H1 (cell line): ENCODE measurements at regions of chr11 and their contacts with region 1.

Region 1: GRCh38 chr11:44775366-44775984 is 48.7 kb downstream of the TSPAN18 start:
- DNase-seq: peak in 1 of 2 experiments; percentile 86
- H3K4me3 ChIP-seq: no peak overlapping the region
- H3K27ac ChIP-seq: no peak overlapping the region
- H3K4me1 ChIP-seq: peaks cover 10 to 28% (median 13%) of the 10 kb centered on the region in 4 experiments
- H3K27me3 ChIP-seq: no peaks in the 10 kb centered on the region
- CTCF ChIP-seq: peak; percentile 91 to 95 (median 94)
- EP300 ChIP-seq: no peak
- POLR2A ChIP-seq: no peak
- RAD21 ChIP-seq: peak; percentile 71 to 85

Region 2: DNA sequence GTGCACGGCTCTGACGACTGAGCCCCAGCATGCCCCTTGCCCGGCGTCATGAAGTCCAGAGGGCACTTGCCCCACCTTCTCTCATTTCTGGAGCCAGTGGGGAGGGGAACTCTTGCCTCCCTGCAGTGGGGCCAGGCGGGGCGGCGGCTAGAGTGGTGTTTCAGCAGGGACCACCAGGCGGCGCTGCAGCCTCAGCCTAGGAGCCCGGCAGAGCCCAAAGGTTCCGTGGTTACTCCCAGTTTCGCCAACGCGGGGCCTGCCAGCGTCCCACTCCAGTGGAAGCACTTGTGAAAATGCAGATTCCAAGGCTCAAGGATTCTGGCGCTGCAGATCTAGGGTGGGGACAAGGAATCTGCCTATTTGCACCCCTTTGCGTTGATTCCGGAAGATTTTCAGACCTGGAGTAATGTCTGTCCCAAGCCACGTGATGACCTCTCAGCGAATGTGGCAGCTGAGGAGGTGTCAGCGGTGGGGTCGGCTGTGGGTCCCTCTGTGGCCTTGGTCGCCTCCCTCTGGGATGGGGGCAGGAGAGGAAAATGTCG is 154.3 kb before region 1 on chr11:
- CTCF ChIA-PET with region 1: interaction called, 65 read pairs
- POLR2A ChIA-PET with region 1: interaction called, 3 read pairs
- DNase-seq: peak; percentile 46 to 98
- H3K4me3 ChIP-seq: peak overlapping the region in 3 of 4 experiments; percentile 30 to 53 (median 40); a peak in 6 of 8 replicates
- H3K27ac ChIP-seq: no peak overlapping the region
- H3K4me1 ChIP-seq: peaks cover 0 to 3% (median 0%) of the 10 kb centered on the region in 4 experiments; a peak in 3 of 7 replicates
- H3K27me3 ChIP-seq: peaks cover 0 to 9% (median 7%) of the 10 kb centered on the region in 4 experiments; a peak in 4 of 7 replicates
- CTCF ChIP-seq: peak; percentile 92 to 96 (median 95)
- EP300 ChIP-seq: no peak
- POLR2A ChIP-seq: no peak
- RAD21 ChIP-seq: peak; percentile 98 to 99

Region 3: DNA sequence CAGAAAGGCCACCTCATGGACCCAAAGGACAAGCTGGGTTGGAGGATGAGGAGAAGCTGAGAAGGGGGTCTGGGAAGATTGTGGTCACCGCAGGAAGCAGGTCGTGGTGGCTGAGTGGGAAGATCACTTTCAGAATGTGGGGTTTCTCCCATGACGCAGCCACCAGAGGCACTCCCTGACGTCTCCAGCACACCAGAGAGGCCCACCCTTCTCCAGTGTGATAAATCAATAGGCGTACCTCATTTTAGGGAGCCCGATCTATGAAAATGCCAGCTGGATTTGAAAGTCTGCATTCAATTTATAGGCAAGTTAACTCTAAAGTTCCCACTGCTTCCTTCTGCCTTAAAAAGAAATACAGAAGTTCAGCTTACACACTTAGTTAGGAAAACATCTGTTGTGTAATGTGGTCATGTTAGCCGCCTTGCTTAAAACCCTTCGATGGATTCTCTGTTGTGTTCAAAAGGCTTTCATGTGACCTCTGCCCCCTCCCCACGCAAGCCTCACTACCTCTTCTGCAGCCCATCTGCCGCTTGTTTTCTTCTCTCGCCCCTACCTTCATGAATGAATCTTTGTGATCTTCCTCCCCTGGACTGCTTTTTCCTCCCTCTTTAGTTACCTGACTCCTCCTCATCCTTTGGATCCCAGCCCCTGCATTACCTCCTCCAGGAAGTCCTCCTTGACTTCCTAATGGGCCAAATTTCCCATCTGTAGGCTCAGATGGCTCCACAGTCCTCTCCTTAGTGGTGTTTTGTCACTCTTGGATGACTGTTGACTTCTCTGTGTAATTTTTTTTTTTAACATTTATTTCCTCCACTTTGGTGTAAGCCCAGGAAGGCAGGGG is 38.0 kb before region 1 on chr11:
- CTCF ChIA-PET with region 1: interaction called, 63 read pairs
- POLR2A ChIA-PET with region 1: no interaction called
- DNase-seq: no peak
- H3K4me3 ChIP-seq: no peak overlapping the region
- H3K27ac ChIP-seq: no peak overlapping the region
- H3K4me1 ChIP-seq: peaks cover 11 to 35% (median 25%) of the 10 kb centered on the region in 4 experiments
- H3K27me3 ChIP-seq: peaks cover 0 to 22% (median 9%) of the 10 kb centered on the region in 4 experiments; a peak in 5 of 7 replicates
- CTCF ChIP-seq: no peak
- EP300 ChIP-seq: no peak
- POLR2A ChIP-seq: no peak
- RAD21 ChIP-seq: no peak

Region 4: DNA sequence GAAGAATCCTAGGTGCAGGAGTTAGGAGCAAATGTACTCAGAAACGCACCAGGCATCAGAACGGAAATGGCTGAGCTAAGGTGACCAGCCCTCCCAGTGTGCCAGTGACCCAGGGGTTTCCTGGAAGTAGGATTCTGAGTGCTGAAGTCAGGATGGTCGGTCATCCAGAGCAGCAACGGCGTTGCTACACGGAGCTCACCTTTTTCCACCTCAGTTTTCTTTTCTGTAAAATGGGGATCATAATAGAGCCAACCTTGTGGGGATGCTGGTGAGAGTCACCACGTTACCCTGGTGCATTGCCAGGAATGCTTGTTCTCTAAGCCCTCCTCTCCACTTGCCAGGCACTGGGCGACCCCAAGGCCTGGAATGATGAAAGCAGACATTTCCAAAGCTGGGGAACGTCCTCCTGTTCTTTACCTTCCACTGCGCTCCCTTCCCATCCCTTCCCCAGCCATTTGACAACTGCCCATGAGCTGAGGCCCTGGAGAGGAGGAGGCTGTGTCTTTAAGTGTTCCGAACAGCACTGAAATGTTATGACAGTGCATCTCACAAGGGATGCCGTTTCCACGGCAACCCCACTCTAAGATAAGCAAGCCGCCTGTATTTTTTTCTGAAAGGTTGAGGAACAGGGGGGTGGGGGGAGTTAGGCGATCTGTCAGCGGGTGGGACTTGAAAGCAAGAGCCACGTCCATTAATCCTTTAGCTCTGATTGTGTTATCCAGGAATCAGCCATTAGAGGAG is 18.0 kb after region 1 on chr11:
- CTCF ChIA-PET with region 1: interaction called, 86 read pairs
- POLR2A ChIA-PET with region 1: interaction called, 3 read pairs
- DNase-seq: no peak
- H3K4me3 ChIP-seq: no peak overlapping the region
- H3K27ac ChIP-seq: no peak overlapping the region
- H3K4me1 ChIP-seq: peaks cover 10 to 23% (median 17%) of the 10 kb centered on the region in 4 experiments
- H3K27me3 ChIP-seq: peaks cover 0 to 4% (median 0%) of the 10 kb centered on the region in 4 experiments; a peak in 1 of 7 replicates
- CTCF ChIP-seq: no peak
- EP300 ChIP-seq: no peak
- POLR2A ChIP-seq: no peak
- RAD21 ChIP-seq: no peak

Region 5: GRCh38 chr11:44848203-44848962 is 72.9 kb after region 1 on chr11:
- CTCF ChIA-PET with region 1: interaction called, 21 read pairs
- POLR2A ChIA-PET with region 1: no interaction called
- DNase-seq: no peak
- H3K4me3 ChIP-seq: no peak overlapping the region
- H3K27ac ChIP-seq: no peak overlapping the region
- H3K4me1 ChIP-seq: peaks cover 3 to 16% (median 5%) of the 10 kb centered on the region in 4 experiments; a peak in 6 of 7 replicates
- H3K27me3 ChIP-seq: no peaks in the 10 kb centered on the region
- CTCF ChIP-seq: no peak
- EP300 ChIP-seq: no peak
- POLR2A ChIP-seq: no peak
- RAD21 ChIP-seq: no peak

Region 6: GRCh38 chr11:44893846-44894617 is 118.6 kb after region 1 on chr11:
- CTCF ChIA-PET with region 1: interaction called, 87 read pairs
- POLR2A ChIA-PET with region 1: no interaction called
- DNase-seq: peak; percentile 79 to 92
- H3K4me3 ChIP-seq: no peak overlapping the region
- H3K27ac ChIP-seq: no peak overlapping the region
- H3K4me1 ChIP-seq: peaks cover 2 to 28% (median 9%) of the 10 kb centered on the region in 4 experiments
- H3K27me3 ChIP-seq: peaks cover 0 to 13% (median 3%) of the 10 kb centered on the region in 4 experiments; a peak in 3 of 7 replicates
- CTCF ChIP-seq: peak; percentile 96 to 99 (median 98)
- EP300 ChIP-seq: no peak
- POLR2A ChIP-seq: no peak
- RAD21 ChIP-seq: peak; percentile 98 to 100

Region 7: DNA sequence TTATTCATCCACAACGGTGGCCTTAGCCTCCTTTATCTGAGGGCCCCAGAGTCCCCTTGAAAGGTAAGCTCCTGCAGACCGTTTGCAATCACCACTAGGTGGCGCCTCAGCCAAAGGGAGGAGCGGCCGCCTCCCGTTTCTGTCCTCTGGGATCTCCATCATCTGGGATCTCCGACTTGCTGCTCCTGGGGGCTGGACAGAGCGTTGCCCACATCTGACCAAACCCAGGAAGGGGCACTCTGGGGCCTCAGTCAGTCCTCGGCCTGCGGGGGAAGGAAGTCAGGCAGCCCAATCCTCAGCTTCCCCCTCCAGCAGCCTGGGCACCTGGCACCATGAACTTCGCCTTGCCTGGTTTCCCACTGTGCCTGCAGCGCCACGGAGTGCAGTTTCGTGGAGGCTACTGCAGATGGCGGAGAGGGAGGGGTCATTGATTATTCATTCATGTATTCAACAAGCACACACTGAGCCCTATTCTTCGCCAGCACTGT is 151.7 kb after region 1 on chr11:
- CTCF ChIA-PET with region 1: interaction called, 25 read pairs
- POLR2A ChIA-PET with region 1: no interaction called
- DNase-seq: peak; percentile 70 to 91
- H3K4me3 ChIP-seq: peak overlapping the region in 1 of 4 experiments; percentile 20; a peak in 1 of 8 replicates
- H3K27ac ChIP-seq: no peak overlapping the region
- H3K4me1 ChIP-seq: peaks cover 0 to 18% (median 13%) of the 10 kb centered on the region in 4 experiments; a peak in 6 of 7 replicates
- H3K27me3 ChIP-seq: no peaks in the 10 kb centered on the region
- CTCF ChIP-seq: peak; percentile 84 to 95 (median 93)
- EP300 ChIP-seq: no peak
- POLR2A ChIP-seq: no peak
- RAD21 ChIP-seq: peak; percentile 86 to 93